ENCODE measurements at regions of chrX and their contacts with region 1.

Region 1: DNA sequence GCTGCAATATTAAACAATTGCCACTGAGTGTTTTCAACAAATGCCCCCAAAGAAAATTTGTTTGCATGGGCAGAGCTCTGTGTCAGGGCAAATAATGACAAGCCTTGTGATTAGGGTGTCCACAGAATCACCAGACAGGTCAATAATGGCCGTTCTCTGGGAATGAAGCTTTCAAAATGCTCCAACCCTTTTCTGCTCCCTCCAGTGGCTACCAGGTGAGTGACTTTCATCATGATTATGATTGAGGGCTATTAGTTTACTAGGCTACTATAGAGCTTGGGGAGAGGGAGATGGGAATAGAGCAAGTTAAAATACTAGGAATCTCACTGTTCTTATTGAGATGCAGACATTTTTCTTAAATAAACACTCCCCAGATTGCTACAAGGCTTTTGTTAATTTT is 23.5 kb downstream of the IRS4 start:
- DNase-seq: no peak
- H3K4me3 ChIP-seq: no peak overlapping the region
- H3K27ac ChIP-seq: no peak overlapping the region
- H3K4me1 ChIP-seq: no peaks in the 10 kb centered on the region
- H3K27me3 ChIP-seq: no peaks in the 10 kb centered on the region
- CTCF ChIP-seq: no peak
- EP300 ChIP-seq: no peak
- POLR2A ChIP-seq: no peak

Region 2: DNA sequence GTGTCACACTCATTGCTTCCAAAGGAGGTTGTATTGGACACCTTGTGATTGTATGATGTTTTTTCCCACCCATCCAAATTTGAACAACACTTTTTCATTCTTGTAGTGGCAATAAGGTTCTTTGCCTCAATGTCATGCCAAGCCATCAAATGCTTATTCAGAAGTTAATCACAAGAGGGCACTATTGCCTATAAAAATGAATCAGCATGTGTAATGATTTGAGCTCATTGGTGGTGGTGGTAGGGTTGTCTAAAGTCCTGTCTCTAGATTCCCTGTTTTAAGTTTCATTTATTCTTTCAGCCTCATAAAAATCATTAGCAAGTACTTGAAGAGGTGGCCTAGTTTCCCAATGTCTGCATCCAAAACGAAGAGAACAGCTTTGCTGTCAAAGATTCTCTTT is 13.5 kb before region 1 on chrX:
- in situ Hi-C with region 1: no loop called
- intact Hi-C with region 1: no loop called
- DNase-seq: no peak
- H3K4me3 ChIP-seq: no peak overlapping the region
- H3K27ac ChIP-seq: no peak overlapping the region
- H3K4me1 ChIP-seq: no peaks in the 10 kb centered on the region
- H3K27me3 ChIP-seq: no peaks in the 10 kb centered on the region
- CTCF ChIP-seq: peak in 2 of 5 experiments; percentile 11 to 22
- EP300 ChIP-seq: no peak
- POLR2A ChIP-seq: no peak

Region 3: DNA sequence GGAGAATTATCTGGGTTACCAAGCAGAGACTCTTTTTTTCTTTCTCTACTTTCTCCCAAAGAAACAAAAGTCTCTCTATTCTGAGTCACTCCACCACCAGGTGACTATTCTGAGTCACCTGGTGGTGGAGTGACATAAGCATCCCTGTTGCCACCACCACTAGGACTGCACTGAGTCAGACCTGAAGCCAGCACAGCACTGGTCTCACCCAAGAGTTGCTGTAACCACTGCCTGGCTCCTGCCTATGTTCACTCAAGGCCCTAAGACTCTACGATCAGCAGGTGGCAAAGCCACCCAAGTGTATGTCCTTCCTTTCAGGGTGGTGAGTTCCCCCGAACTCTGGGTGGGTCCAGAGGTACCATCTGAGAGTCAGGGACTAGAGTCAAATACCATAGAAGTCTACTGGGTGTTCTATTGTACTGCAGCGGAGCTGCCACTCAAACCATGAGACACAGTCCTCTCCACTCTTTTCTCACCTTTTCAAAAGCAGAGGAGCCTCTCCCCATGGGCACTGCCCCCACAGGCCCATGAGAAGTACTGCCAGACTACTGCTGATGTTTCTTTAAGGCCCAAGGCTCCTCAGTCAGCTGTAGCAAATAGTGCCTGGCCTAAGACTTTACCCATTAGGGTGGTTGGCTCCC is 233.1 kb after region 1 on chrX:
- in situ Hi-C with region 1: no loop called
- intact Hi-C with region 1: no loop called
- DNase-seq: no peak
- H3K4me3 ChIP-seq: no peak overlapping the region
- H3K27ac ChIP-seq: no peak overlapping the region
- H3K4me1 ChIP-seq: no peaks in the 10 kb centered on the region
- H3K27me3 ChIP-seq: no peaks in the 10 kb centered on the region
- CTCF ChIP-seq: no peak
- EP300 ChIP-seq: no peak
- POLR2A ChIP-seq: no peak

Region 4: GRCh38 chrX:109660435-109661143 is 947.7 kb after region 1 on chrX:
- in situ Hi-C with region 1: no loop called
- intact Hi-C with region 1: no loop called
- DNase-seq: no peak
- H3K4me3 ChIP-seq: no peak overlapping the region
- H3K27ac ChIP-seq: no peak overlapping the region
- H3K4me1 ChIP-seq: no peaks in the 10 kb centered on the region
- H3K27me3 ChIP-seq: no peaks in the 10 kb centered on the region
- CTCF ChIP-seq: no peak
- EP300 ChIP-seq: no peak
- POLR2A ChIP-seq: no peak

Region 5: DNA sequence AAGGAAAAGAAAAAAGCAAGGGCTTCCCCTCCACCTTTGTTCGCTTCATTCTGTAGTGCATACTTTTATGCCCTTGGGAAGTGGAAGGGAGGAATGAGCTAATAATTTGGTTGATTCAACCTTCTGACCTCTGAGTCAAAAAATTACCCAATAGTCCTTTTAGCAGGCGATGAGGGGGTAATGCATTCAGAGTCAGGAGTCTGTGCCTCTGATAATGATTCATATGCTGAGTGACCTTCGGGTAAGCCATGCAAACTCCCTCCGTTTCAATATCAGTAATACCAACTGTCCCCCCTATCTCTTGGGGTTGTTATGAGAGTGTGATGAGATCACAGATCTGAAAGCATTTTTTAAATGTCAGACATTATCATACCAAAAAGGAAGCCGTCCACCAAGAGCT is 1061.8 kb after region 1 on chrX:
- in situ Hi-C with region 1: no loop called
- intact Hi-C with region 1: loop called (anchors 5 kb)
- DNase-seq: no peak
- H3K4me3 ChIP-seq: no peak overlapping the region
- H3K27ac ChIP-seq: no peak overlapping the region
- H3K4me1 ChIP-seq: no peaks in the 10 kb centered on the region
- H3K27me3 ChIP-seq: no peaks in the 10 kb centered on the region
- CTCF ChIP-seq: no peak
- EP300 ChIP-seq: no peak
- POLR2A ChIP-seq: no peak

Measured in transverse colon (tissue), 4 donors.